ENCODE measurements at regions of chr15 and their contacts with region 1.

Region 1: DNA sequence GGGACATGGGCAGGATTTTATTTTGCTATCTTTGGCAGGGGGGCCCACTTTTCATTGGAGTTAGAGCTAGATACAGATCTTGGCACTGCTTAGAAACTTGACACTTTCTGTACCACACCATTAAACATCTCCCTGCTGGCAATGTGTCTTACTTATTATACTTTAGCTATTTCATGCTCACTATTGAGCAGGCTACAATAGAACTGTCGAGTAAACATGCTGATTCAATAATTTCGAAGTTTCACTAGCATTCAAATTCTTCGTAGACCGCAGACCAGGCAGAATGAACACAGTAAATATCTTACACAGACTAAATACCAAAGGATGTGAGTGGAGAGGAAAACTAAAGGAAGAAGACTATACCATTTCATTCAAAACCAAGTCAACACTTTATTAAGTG is 180.8 kb downstream of the UNC13C start:
- DNase-seq: no peak

Region 2: DNA sequence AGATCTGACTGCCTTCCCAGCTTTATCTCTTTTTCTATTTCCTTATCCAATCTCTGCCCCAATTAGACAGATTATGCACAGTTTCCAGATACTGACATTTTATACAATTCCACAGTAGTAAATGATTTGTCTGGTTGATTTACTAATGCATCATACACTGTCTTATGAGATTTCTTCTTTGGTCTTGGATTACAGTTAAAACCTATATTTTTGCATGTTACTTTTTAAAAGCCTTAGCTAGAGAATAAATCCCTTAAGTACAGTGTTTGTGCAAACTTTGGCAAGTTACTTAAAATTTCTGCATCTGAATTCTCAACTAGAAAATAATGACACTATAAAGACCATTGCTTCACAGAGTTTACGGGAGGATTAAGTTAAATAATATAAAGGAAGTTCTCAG is 174.8 kb before region 1 on chr15:
- intact Hi-C with region 1: no loop called
- DNase-seq: no peak

Region 3: GRCh38 chr15:54187325-54187724 is 28.3 kb after region 1 on chr15:
- intact Hi-C with region 1: loop called in 1 of 2 experiments (anchors 1 kb)
- DNase-seq: no peak

Region 4: GRCh38 chr15:55407949-55408791 is 1249.2 kb after region 1 on chr15 and contains the starts of genes CCPG1 and PIERCE2:
- intact Hi-C with region 1: no loop called
- DNase-seq: peak; percentile 97
- total RNA-seq, gene CCPG1: 89.9 to 91.3 TPM
- total RNA-seq, gene PIERCE2: 1.4 to 1.8 TPM

Measured in posterior vena cava (tissue), 2 donors.